ENCODE measurements at regions of chr17 and their contacts with region 1.

Region 1: GRCh38 chr17:50661795-50662391 is 27.2 kb downstream of the ABCC3 start:
- DNase-seq: peak; percentile 93 to 98
- H3K4me3 ChIP-seq: peak overlapping the region; percentile 39; the same call in 1 of the 2 replicates
- H3K27ac ChIP-seq: peak overlapping the region; percentile 97
- H3K4me1 ChIP-seq: peaks cover 74% of the 10 kb centered on the region
- H3K27me3 ChIP-seq: no peaks in the 10 kb centered on the region
- CTCF ChIP-seq: no peak

Region 2: GRCh38 chr17:50507871-50508572 is 153.9 kb before region 1 on chr17 and contains the start of gene MYCBPAP:
- CTCF ChIA-PET with region 1: no interaction called
- POLR2A ChIA-PET with region 1: interaction called, 26 read pairs
- intact Hi-C with region 1: no loop called
- DNase-seq: peak in 1 of 2 experiments; percentile 76
- H3K4me3 ChIP-seq: peak within 1 kb of the TSS; percentile 44; the same call in 1 of the 2 replicates
- H3K27ac ChIP-seq: no peak within 1 kb of the TSS
- H3K4me1 ChIP-seq: peaks cover 42% of the 10 kb centered on the region
- H3K27me3 ChIP-seq: no peaks in the 10 kb centered on the region
- CTCF ChIP-seq: no peak
- total RNA-seq, gene MYCBPAP: 4.9 and 11.6 TPM in 2 replicates

Region 3: DNA sequence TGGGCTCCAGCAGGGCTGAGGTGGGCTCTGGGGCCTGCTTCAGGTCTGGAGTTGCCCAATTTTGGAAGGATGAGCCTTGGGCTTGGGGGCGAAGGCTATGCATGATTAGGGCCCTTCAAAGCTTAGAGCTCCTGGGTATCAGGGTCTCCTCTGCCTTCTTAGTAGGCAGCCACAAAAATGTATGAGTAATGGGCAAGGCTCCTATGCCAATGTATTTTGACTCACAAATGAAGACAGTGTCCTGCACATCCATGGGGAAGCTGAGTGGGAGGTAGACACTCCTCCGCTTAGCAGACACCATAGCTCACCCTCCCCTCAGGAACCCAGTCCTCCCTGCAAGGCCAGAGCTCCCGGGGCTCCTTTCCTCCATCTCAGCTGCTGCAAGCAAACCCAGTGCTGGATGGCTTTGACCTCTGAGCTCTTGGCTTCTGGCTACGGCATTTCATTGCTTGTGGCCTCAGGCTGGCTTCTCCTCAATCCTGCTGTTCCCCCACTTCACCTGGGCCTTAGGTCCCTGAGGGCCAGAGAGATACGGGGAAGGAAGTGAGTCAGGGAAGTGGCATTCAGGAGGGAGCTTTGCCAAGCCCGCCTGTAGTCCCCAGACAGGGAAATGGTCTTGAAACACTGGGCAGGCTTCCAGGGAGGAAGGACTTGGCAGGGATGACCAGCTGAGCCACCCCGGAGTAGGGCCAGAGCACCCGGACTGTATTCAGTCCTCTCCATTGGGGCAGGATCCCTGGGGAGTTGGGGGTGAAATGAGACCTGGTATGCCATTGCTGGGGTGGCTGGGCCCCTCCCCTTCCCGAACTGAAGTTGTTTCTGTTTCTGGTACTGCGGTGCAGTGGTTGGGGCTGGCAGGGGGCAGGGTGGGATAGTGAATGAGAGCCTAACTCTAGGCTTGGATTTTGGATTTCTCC is 22.8 kb before region 1 on chr17:
- CTCF ChIA-PET with region 1: interaction called, 33 read pairs
- POLR2A ChIA-PET with region 1: interaction called, 22 read pairs
- intact Hi-C with region 1: loop called (anchors 1 kb)
- DNase-seq: peak; percentile 97 to 100
- H3K4me3 ChIP-seq: peak overlapping the region; percentile 81; the same call in 1 of the 2 replicates
- H3K27ac ChIP-seq: peak overlapping the region; percentile 91
- H3K4me1 ChIP-seq: peaks cover 78% of the 10 kb centered on the region
- H3K27me3 ChIP-seq: no peaks in the 10 kb centered on the region
- CTCF ChIP-seq: no peak

Region 4: DNA sequence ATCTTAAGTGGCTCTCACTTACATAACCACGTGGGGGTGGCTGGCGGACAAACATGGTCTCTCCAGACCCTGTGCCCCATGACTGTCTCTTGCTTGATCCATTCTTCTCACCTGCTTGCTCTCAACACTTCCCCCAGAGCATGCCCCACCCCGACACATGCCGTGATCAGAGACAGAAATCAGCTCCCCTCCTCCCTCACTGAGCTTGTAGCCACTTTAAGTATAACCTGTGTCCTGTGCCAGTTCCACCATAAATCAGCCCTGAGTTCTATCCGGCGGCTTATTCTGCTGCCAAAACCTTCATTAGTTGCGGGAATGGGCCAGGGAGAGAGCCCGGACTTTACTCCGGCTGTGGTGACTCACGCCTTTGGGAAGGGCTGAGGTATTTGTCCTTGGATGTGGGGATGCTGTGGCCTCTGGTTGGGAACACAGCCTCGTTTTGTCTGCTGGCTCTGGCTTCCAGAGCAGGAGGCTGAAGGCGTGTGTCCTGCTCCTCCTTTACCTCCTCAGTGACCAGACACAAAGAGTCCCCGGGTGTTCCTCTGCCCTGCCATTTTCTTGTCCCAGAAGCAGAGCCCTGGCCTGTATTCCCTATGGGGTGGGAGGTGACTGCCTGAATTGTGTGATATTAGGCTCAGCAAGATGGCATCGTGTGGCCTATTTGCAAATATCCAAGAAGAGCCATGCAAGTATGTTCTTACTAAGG is 24.8 kb after region 1 on chr17:
- CTCF ChIA-PET with region 1: no interaction called
- POLR2A ChIA-PET with region 1: interaction called, 6 read pairs
- intact Hi-C with region 1: loop called (anchors 2 kb)
- DNase-seq: peak in 1 of 2 experiments; percentile 60
- H3K4me3 ChIP-seq: no peak overlapping the region
- H3K27ac ChIP-seq: peak overlapping the region; percentile 33; the same call in 1 of the 2 replicates
- H3K4me1 ChIP-seq: peaks cover 81% of the 10 kb centered on the region
- H3K27me3 ChIP-seq: no peaks in the 10 kb centered on the region
- CTCF ChIP-seq: no peak

Region 5: DNA sequence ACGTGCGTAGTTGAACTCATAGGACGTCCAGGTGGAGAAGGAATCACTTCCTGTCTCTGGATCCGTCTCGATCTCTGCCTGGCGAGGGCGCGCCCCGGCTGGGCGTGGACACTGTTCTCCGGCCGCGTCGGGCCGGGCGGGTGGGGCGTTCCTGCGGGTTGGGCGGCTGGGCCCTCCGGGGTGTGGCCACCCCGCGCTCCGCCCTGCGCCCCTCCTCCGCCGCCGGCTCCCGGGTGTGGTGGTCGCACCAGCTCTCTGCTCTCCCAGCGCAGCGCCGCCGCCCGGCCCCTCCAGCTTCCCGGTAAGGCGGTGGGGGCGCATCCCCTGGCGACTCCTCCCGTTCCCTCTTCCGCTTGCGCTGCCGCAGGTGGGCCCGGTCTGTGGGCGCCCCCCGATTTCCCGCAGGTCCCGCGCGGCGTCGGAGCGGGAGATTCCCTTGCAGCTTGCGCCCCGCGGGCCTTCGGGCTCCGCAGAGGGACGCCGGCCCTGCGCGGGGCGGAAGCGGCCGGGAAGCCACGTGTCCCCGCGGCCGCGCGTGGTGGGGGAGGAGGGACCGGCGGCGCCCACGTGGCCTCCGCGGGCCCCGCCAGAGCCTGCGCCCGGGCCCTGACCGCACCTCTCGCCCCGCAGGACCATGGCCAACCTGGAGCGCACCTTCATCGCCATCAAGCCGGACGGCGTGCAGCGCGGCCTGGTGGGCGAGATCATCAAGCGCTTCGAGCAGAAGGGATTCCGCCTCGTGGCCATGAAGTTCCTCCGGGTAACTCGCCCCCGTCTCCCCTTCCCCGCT is 504.5 kb after region 1 on chr17 and contains the start of gene NME2:
- CTCF ChIA-PET with region 1: no interaction called
- POLR2A ChIA-PET with region 1: interaction called, 16 read pairs
- intact Hi-C with region 1: no loop called
- DNase-seq: peak; percentile 79 to 90
- H3K4me3 ChIP-seq: peak within 1 kb of the TSS; percentile 80
- H3K27ac ChIP-seq: peak within 1 kb of the TSS; percentile 78
- H3K4me1 ChIP-seq: peaks cover 18% of the 10 kb centered on the region; the same call in 1 of the 2 replicates
- H3K27me3 ChIP-seq: no peaks in the 10 kb centered on the region
- CTCF ChIP-seq: no peak
- total RNA-seq, gene NME2: 600 and 826 TPM in 2 replicates